A673 (cell line): ENCODE measurements at regions of chr4 and their contacts with region 1.

Region 1: GRCh38 chr4:13534344-13535063 is 9.8 kb downstream of the NKX3-2 start:
- DNase-seq: no peak
- H3K4me3 ChIP-seq: no peak overlapping the region
- H3K27ac ChIP-seq: no peak overlapping the region
- H3K4me1 ChIP-seq: no peaks in the 10 kb centered on the region
- H3K27me3 ChIP-seq: peaks cover 13% of the 10 kb centered on the region
- CTCF ChIP-seq: no peak

Region 2: DNA sequence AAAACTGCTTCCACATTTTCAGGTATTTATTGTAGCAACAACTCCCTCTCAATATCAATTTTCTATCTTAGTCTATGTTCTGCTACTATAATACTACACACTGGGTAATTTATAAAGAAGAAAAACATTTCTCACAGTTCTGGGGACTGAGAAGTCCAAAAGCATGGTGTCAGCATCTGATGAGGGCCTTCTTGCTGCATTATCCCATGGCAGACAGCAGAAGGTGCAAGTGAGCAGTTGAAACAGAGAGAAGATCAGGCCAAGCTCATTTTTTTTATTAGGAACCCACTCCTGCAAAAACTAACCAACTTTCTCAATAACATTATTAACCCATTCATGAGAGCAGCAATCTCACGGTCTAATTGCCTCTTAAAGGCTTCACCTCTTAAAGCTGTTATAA is 426.4 kb before region 1 on chr4:
- CTCF ChIA-PET with region 1: no interaction called
- POLR2A ChIA-PET with region 1: no interaction called
- intact Hi-C with region 1: no loop called
- DNase-seq: no peak
- H3K4me3 ChIP-seq: no peak overlapping the region
- H3K27ac ChIP-seq: no peak overlapping the region
- H3K4me1 ChIP-seq: no peaks in the 10 kb centered on the region
- H3K27me3 ChIP-seq: no peaks in the 10 kb centered on the region
- CTCF ChIP-seq: 0 out of 2 replicates have a peak, but pooled peaks have one; percentile 15

Region 3: GRCh38 chr4:13160920-13161319 is 373.6 kb before region 1 on chr4:
- CTCF ChIA-PET with region 1: interaction called, 14 read pairs
- POLR2A ChIA-PET with region 1: no interaction called
- intact Hi-C with region 1: no loop called
- DNase-seq: no peak
- H3K4me3 ChIP-seq: no peak overlapping the region
- H3K27ac ChIP-seq: no peak overlapping the region
- H3K4me1 ChIP-seq: no peaks in the 10 kb centered on the region
- H3K27me3 ChIP-seq: no peaks in the 10 kb centered on the region
- CTCF ChIP-seq: no peak

Region 4: GRCh38 chr4:14218641-14219040 is 684.1 kb after region 1 on chr4:
- CTCF ChIA-PET with region 1: no interaction called
- POLR2A ChIA-PET with region 1: no interaction called
- intact Hi-C with region 1: no loop called
- DNase-seq: peak; percentile 36
- H3K4me3 ChIP-seq: no peak overlapping the region
- H3K27ac ChIP-seq: no peak overlapping the region
- H3K4me1 ChIP-seq: no peaks in the 10 kb centered on the region
- H3K27me3 ChIP-seq: no peaks in the 10 kb centered on the region
- CTCF ChIP-seq: no peak